ENCODE measurements at regions of chr6 and their contacts with region 1.

Region 1: GRCh38 chr6:113858480-113859348 is 1.6 kb downstream of the MARCKS start:
- DNase-seq: peak; percentile 95
- H3K4me3 ChIP-seq: peak overlapping the region; percentile 98 to 99 (median 99)
- H3K27ac ChIP-seq: peak overlapping the region; percentile 99
- H3K4me1 ChIP-seq: peaks cover 16% of the 10 kb centered on the region
- H3K27me3 ChIP-seq: no peaks in the 10 kb centered on the region
- CTCF ChIP-seq: peak; percentile 43 to 84

Region 2: DNA sequence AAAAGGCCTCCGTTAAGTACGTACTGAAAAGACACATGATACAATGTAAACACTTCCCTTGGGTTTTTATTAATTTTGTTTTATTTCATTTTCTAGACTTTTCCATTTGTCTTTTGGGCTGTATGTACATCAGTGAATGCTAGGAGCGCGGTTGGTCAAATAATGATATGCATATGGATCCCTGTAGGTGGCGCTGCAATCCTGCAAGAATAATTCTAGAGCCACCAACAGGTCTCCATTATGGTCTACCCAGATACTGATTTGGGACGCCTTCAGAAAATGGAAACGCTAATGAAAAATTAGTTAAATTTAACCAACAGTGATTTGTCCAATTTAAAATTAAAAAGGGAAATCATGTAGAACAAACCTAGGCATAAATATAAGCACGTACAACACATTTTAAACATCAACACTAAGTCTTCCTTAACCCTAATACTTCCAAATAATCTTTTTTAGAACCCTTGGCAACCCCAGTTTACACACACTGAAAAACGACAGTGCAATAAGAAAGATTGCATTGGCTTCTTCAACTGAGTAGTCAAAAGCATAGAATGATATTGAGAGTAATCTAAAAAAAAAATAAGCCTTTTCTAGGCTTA is 1078.1 kb before region 1 on chr6:
- CTCF ChIA-PET with region 1: no interaction called
- dilution Hi-C with region 1: no loop called
- in situ Hi-C with region 1: no loop called
- intact Hi-C with region 1: loop called (anchors 1 kb)
- DNase-seq: peak; percentile 61
- H3K4me3 ChIP-seq: no peak overlapping the region
- H3K27ac ChIP-seq: no peak overlapping the region
- H3K4me1 ChIP-seq: no peaks in the 10 kb centered on the region
- H3K27me3 ChIP-seq: no peaks in the 10 kb centered on the region
- CTCF ChIP-seq: peak; percentile 53 to 81

Region 3: GRCh38 chr6:113352029-113352801 is 506.5 kb before region 1 on chr6:
- CTCF ChIA-PET with region 1: no interaction called
- dilution Hi-C with region 1: no loop called
- in situ Hi-C with region 1: no loop called
- intact Hi-C with region 1: loop called (anchors 2 kb)
- DNase-seq: peak; percentile 75
- H3K4me3 ChIP-seq: no peak overlapping the region
- H3K27ac ChIP-seq: peak overlapping the region; percentile 75
- H3K4me1 ChIP-seq: peaks cover 45% of the 10 kb centered on the region
- H3K27me3 ChIP-seq: no peaks in the 10 kb centered on the region
- CTCF ChIP-seq: no peak

Region 4: DNA sequence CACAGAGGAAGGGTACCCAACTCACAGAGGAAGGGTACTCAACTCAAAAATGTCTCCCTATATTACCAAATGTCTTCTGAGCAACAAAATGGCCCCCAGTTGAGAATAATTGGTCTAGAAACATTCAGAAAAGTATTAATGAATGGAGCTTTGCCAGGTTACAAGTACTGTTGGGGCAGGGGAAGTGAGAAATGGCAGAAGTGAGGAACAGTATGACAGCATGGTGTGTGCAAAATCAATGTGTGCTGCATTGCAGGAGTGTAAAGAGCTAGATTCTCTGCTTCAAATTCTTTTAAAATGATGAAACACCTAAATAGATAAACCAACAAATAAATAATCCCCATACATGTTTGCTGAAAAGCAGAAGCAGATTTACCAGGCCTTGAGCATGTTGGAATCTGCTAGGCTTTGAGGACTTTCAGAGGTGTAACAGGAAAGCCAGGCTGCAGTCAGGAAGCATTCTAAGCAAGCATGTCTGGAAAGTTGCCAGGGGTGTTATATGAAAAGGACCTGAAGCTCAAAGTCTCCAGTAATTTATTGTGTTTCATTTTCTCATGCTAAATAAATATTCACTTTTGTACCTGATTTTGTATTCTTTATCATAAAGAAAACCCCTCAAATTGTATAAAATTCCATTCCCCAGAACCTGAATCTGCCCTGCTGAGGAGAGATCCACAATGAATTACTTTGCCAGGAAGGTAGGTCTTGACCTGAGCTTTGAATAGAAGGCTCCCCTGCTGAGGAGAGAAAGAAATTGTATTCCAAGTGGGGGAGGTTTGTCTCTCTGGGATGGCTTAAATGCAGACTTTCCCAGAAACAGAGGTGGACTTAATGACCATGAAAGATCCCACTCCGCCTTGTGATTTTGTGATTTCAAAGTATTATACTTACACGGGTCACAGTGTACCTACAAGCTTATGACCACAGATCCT is 266.6 kb before region 1 on chr6:
- CTCF ChIA-PET with region 1: interaction called, 4 read pairs
- dilution Hi-C with region 1: no loop called
- in situ Hi-C with region 1: no loop called
- intact Hi-C with region 1: loop called (anchors 1 kb)
- DNase-seq: no peak
- H3K4me3 ChIP-seq: no peak overlapping the region
- H3K27ac ChIP-seq: no peak overlapping the region
- H3K4me1 ChIP-seq: no peaks in the 10 kb centered on the region
- H3K27me3 ChIP-seq: no peaks in the 10 kb centered on the region
- CTCF ChIP-seq: no peak

Region 5: DNA sequence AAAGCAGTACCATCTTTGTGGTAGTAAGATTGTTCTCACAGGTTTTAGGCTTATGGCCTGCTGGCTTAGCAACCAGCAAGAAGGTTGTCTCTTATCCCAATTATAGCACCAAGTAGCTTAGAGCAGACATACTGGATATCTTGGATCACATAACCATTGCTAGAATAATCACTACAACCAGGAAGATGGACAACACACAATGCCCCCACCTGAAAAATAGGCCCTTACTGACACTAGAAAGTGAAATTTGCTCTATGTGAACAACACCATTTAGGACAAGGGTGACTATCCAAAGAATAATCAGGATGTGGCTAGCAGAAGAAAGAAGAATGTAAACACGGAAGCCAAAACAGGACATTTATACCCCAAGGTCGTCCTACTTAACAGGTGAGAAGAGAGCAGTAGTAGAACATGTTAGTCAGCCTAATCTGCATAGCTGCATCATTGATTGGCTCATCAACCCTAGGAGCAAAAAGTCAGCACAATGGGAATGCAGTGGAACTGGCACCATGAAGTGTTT is 174.3 kb before region 1 on chr6:
- CTCF ChIA-PET with region 1: no interaction called
- dilution Hi-C with region 1: no loop called
- in situ Hi-C with region 1: no loop called
- intact Hi-C with region 1: loop called (anchors 1 kb)
- DNase-seq: peak; percentile 75
- H3K4me3 ChIP-seq: no peak overlapping the region
- H3K27ac ChIP-seq: no peak overlapping the region
- H3K4me1 ChIP-seq: peaks cover 12% of the 10 kb centered on the region
- H3K27me3 ChIP-seq: no peaks in the 10 kb centered on the region
- CTCF ChIP-seq: no peak

Region 6: GRCh38 chr6:113763883-113764282 is 94.8 kb before region 1 on chr6:
- CTCF ChIA-PET with region 1: interaction called, 5 read pairs
- dilution Hi-C with region 1: no loop called
- in situ Hi-C with region 1: no loop called
- intact Hi-C with region 1: loop called (anchors 1 kb)
- DNase-seq: peak; percentile 98
- H3K4me3 ChIP-seq: no peak overlapping the region
- H3K27ac ChIP-seq: peak overlapping the region; percentile 89
- H3K4me1 ChIP-seq: peaks cover 17% of the 10 kb centered on the region
- H3K27me3 ChIP-seq: no peaks in the 10 kb centered on the region
- CTCF ChIP-seq: no peak

Measured in mammary epithelial cell (primary cell).